Vagina (tissue), 2 donors: ENCODE measurements at regions of chr9 and their contacts with region 1.

Region 1: DNA sequence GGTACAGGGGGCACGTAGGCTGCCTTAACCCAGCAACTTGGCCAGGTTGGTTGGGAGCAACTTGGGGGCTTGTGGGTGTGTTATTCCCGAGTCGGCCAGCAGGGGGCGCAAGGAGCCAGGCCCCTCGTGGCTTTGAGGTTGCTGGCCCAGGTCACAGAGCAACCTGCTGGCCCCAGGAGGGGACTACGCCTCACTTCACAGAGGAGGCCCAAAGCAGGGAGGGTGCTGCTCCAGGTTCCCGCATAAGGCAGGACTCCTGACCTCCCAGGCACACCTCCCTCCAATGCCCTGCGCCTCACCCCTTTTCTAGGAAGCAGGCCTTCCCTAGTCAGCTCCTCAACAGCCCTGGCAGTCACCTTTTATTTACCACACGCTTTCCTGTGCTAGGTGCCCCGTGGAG is 18.1 kb downstream of the KYAT1 start:
- DNase-seq: no peak
- H3K4me3 ChIP-seq: no peak overlapping the region
- H3K27ac ChIP-seq: peak overlapping the region; percentile 20
- H3K4me1 ChIP-seq: peaks cover 23% of the 10 kb centered on the region
- H3K27me3 ChIP-seq: no peaks in the 10 kb centered on the region
- CTCF ChIP-seq: peak; percentile 94 to 97 (median 95)
- POLR2A ChIP-seq: no peak

Region 2: GRCh38 chr9:128927731-128928411 is 64.2 kb after region 1 on chr9:
- intact Hi-C with region 1: loop called (anchors 5 kb)
- DNase-seq: no peak
- H3K4me3 ChIP-seq: no peak overlapping the region
- H3K27ac ChIP-seq: peak overlapping the region; percentile 66
- H3K4me1 ChIP-seq: peaks cover 23% of the 10 kb centered on the region
- H3K27me3 ChIP-seq: no peaks in the 10 kb centered on the region
- CTCF ChIP-seq: peak; percentile 72 to 94 (median 85)
- POLR2A ChIP-seq: no peak